ENCODE measurements at regions of chr1 and their contacts with region 1.

Region 1: GRCh38 chr1:145963995-145964901 is at the starts of genes ANKRD34A and POLR3GL:
- DNase-seq: peak; percentile 95
- ATAC-seq: peak; percentile 88
- H3K4me3 Mint-ChIP-seq: peak within 1 kb of the TSS; percentile 85
- H3K27ac Mint-ChIP-seq: peak within 1 kb of the TSS; percentile 87
- H3K4me1 Mint-ChIP-seq: peaks cover 33% of the 10 kb centered on the region
- H3K27me3 Mint-ChIP-seq: no peaks in the 10 kb centered on the region
- total RNA-seq, gene ANKRD34A: 5.8 to 6.1 TPM
- total RNA-seq, gene POLR3GL: 19.3 to 22.4 TPM

Region 2: DNA sequence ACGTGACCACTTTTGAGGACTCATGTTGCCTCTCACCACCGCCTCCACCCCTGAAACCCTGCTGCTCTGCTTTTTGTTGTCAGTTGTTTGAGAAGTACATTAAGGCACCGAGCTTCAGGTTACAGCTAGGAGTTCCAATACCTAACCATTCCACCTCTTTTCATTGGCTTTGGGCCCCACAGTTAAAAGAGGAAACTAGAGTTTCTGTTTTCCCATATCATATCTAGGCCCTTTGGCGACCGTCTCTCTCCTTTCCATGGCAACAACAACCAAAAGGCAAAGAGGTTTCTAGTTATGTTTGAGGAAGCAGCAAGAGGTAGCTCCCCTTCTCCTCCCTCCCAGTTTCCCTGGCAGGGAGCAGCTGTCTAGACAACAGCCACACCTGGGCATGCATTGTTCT is 84.5 kb before region 1 on chr1:
- CTCF ChIA-PET with region 1: no interaction called
- POLR2A ChIA-PET with region 1: no interaction called
- intact Hi-C with region 1: no loop called
- DNase-seq: no peak
- ATAC-seq: no peak
- H3K4me3 Mint-ChIP-seq: no peak overlapping the region
- H3K27ac Mint-ChIP-seq: no peak overlapping the region
- H3K4me1 Mint-ChIP-seq: peaks cover 4% of the 10 kb centered on the region
- H3K27me3 Mint-ChIP-seq: peaks cover 14% of the 10 kb centered on the region

Region 3: GRCh38 chr1:145918144-145918992 is 45.9 kb before region 1 on chr1 and contains the start of gene PEX11B:
- CTCF ChIA-PET with region 1: interaction called, 5 read pairs
- POLR2A ChIA-PET with region 1: interaction called, 5 read pairs
- intact Hi-C with region 1: loop called in 1 of 2 experiments (anchors 1 kb)
- DNase-seq: peak; percentile 94
- ATAC-seq: peak; percentile 89
- H3K4me3 Mint-ChIP-seq: peak within 1 kb of the TSS; percentile 93
- H3K27ac Mint-ChIP-seq: peak within 1 kb of the TSS; percentile 94
- H3K4me1 Mint-ChIP-seq: peaks cover 46% of the 10 kb centered on the region
- H3K27me3 Mint-ChIP-seq: no peaks in the 10 kb centered on the region
- total RNA-seq, gene PEX11B: 22.6 to 26.4 TPM

Region 4: GRCh38 chr1:146007506-146008133 is 43.4 kb after region 1 on chr1:
- CTCF ChIA-PET with region 1: interaction called, 14 read pairs
- POLR2A ChIA-PET with region 1: interaction called, 4 read pairs
- intact Hi-C with region 1: no loop called
- DNase-seq: no peak
- ATAC-seq: no peak
- H3K4me3 Mint-ChIP-seq: peak overlapping the region; percentile 58
- H3K27ac Mint-ChIP-seq: peak overlapping the region; percentile 76
- H3K4me1 Mint-ChIP-seq: peaks cover 38% of the 10 kb centered on the region
- H3K27me3 Mint-ChIP-seq: no peaks in the 10 kb centered on the region

Region 5: GRCh38 chr1:146036965-146037646 is 72.9 kb after region 1 on chr1:
- CTCF ChIA-PET with region 1: interaction called, 5 read pairs
- POLR2A ChIA-PET with region 1: no interaction called
- intact Hi-C with region 1: loop called in 1 of 2 experiments (anchors 1 kb)
- DNase-seq: peak; percentile 91
- ATAC-seq: peak; percentile 45
- H3K4me3 Mint-ChIP-seq: peak overlapping the region; percentile 95
- H3K27ac Mint-ChIP-seq: peak overlapping the region; percentile 98
- H3K4me1 Mint-ChIP-seq: peaks cover 36% of the 10 kb centered on the region
- H3K27me3 Mint-ChIP-seq: peaks cover 2% of the 10 kb centered on the region

Measured in activated CD4-positive, alpha-beta T cell treated with anti-CD3 and anti-CD28 coated beads for 36 hours (primary cell).